CD4-positive, alpha-beta T cell (primary cell): ENCODE measurements at regions of chr16 and their contacts with region 1.

Region 1: GRCh38 chr16:31868691-31869167 is 4.9 kb upstream of the ZNF267 start:
- DNase-seq: peak; percentile 68 to 88 (median 77)
- ATAC-seq: peak; percentile 35
- H3K4me3 ChIP-seq: peak overlapping the region; percentile 42
- H3K4me3 Mint-ChIP-seq: peak overlapping the region; percentile 78
- H3K27ac ChIP-seq: peak overlapping the region; percentile 49 to 92
- H3K27ac Mint-ChIP-seq: peak overlapping the region; percentile 74
- H3K4me1 ChIP-seq: peaks cover 43% of the 10 kb centered on the region
- H3K4me1 Mint-ChIP-seq: peaks cover 39% of the 10 kb centered on the region
- H3K27me3 ChIP-seq: no peaks in the 10 kb centered on the region
- H3K27me3 Mint-ChIP-seq: no peaks in the 10 kb centered on the region
- CTCF ChIP-seq: peak; percentile 94

Region 2: GRCh38 chr16:30957456-30958174 is 911.1 kb before region 1 on chr16 and contains the start of gene SETD1A:
- CTCF ChIA-PET with region 1: interaction called, 3 read pairs
- POLR2A ChIA-PET with region 1: no interaction called
- intact Hi-C with region 1: loop called in 1 of 2 experiments (anchors 10 kb)
- DNase-seq: peak; percentile 94 to 99 (median 97)
- ATAC-seq: peak; percentile 86
- H3K4me3 ChIP-seq: peak within 1 kb of the TSS; percentile 82
- H3K4me3 Mint-ChIP-seq: peak within 1 kb of the TSS; percentile 97
- H3K27ac ChIP-seq: peak within 1 kb of the TSS; percentile 95
- H3K27ac Mint-ChIP-seq: peak within 1 kb of the TSS; percentile 97
- H3K4me1 ChIP-seq: peaks cover 37% of the 10 kb centered on the region
- H3K4me1 Mint-ChIP-seq: peaks cover 39% of the 10 kb centered on the region
- H3K27me3 ChIP-seq: no peaks in the 10 kb centered on the region
- H3K27me3 Mint-ChIP-seq: no peaks in the 10 kb centered on the region
- CTCF ChIP-seq: no peak
- total RNA-seq, gene SETD1A: 40.1 to 41.2 TPM

Region 3: DNA sequence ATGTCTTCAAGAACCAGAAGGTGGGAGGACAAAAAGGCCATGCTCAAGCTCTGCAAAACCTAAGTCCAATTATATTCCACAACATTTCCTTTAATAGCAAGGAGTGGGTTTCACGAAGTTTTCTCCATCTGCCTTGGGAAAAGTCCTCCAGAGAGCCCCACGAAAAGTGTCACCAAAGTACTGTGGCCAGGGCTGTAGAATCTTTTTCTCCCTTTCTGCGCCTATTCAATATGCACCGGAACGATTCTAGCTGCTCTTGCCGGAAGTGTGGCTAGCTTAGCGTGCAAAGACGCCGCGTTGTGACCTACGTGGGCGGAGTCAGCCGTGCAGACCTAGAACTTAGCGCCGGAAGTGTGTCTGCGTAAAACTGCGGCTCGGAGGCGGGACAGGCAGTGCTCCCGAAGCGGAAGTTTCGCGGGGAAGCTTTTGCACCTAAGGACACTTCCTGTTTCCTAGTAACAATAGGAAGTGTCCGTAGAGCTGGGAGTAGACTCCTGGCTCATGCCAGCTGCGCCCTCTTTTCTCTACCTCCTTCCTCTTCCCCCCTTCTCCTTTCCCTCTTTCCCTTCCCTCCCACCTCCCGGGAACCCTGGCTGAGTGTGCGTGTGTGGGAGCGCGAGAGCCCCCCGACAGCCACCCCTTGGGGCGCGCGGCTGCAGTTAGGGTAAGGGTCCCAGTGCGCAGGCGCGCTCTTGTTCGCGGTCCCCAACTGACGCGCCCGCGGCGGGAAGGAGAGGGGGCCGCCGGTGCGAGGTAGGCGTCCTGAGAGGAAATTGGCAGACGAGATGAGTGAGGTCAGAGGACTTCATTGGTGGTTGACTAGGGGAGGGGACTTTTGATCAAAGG is 794.5 kb before region 1 on chr16 and contains the starts of genes ZNF646 and ZNF668:
- CTCF ChIA-PET with region 1: no interaction called
- POLR2A ChIA-PET with region 1: interaction called, 11 read pairs
- intact Hi-C with region 1: loop called in 1 of 2 experiments (anchors 5 kb)
- DNase-seq: peak; percentile 94 to 100 (median 97)
- ATAC-seq: peak; percentile 81
- H3K4me3 ChIP-seq: peak within 1 kb of the TSS; percentile 96
- H3K4me3 Mint-ChIP-seq: peak within 1 kb of the TSS; percentile 98
- H3K27ac ChIP-seq: peak within 1 kb of the TSS; percentile 93 to 95
- H3K27ac Mint-ChIP-seq: peak within 1 kb of the TSS; percentile 92
- H3K4me1 ChIP-seq: peaks cover 35% of the 10 kb centered on the region
- H3K4me1 Mint-ChIP-seq: peaks cover 34% of the 10 kb centered on the region
- H3K27me3 ChIP-seq: no peaks in the 10 kb centered on the region
- H3K27me3 Mint-ChIP-seq: no peaks in the 10 kb centered on the region
- CTCF ChIP-seq: no peak
- total RNA-seq, gene ZNF646: 14.3 to 16.6 TPM
- total RNA-seq, gene ZNF668: 4.5 to 6.0 TPM

Region 4: DNA sequence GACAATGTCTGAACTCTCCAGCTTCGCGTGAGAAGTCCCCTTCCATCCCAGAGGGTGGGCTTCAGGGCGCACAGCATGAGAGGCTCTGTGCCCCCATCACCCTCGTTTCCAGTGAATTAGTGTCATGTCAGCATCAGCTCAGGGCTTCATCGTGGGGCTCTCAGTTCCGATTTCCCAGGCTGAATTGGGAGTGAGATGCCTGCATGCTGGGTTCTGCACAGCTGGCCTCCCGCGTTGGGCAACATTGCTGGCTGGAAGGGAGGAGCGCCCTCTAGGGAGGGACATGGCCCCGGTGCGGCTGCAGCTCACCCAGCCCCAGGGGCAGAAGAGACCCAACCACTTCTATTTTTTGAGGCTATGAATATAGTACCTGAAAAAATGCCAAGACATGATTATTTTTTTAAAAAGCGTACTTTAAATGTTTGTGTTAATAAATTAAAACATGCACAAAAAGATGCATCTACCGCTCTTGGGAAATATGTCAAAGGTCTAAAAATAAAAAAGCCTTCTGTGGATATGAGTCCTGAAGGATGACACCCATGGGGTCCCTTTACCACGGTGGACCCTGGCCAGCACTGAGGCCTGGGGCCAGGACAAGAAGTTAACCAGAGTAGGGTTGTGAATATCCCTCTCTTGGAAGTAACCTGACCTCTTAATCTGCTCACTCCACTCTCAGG is 486.1 kb before region 1 on chr16:
- CTCF ChIA-PET with region 1: no interaction called
- POLR2A ChIA-PET with region 1: no interaction called
- intact Hi-C with region 1: loop called in 1 of 2 experiments (anchors 5 kb)
- DNase-seq: peak; percentile 26 to 74 (median 50)
- ATAC-seq: peak; percentile 69
- H3K4me3 ChIP-seq: no peak overlapping the region
- H3K4me3 Mint-ChIP-seq: no peak overlapping the region
- H3K27ac ChIP-seq: no peak overlapping the region
- H3K27ac Mint-ChIP-seq: no peak overlapping the region
- H3K4me1 ChIP-seq: peaks cover 4% of the 10 kb centered on the region
- H3K4me1 Mint-ChIP-seq: no peaks in the 10 kb centered on the region
- H3K27me3 ChIP-seq: peaks cover 0 to 4% of the 10 kb centered on the region in 2 experiments
- H3K27me3 Mint-ChIP-seq: peaks cover 20% of the 10 kb centered on the region
- CTCF ChIP-seq: peak; percentile 53

Region 5: GRCh38 chr16:31695667-31696066 is 173.1 kb before region 1 on chr16:
- CTCF ChIA-PET with region 1: interaction called, 3 read pairs
- POLR2A ChIA-PET with region 1: interaction called, 17 read pairs
- intact Hi-C with region 1: loop called in 1 of 2 experiments (anchors 2 kb)
- DNase-seq: peak in 12 of 14 experiments; percentile 27 to 93 (median 53)
- ATAC-seq: peak; percentile 94
- H3K4me3 ChIP-seq: no peak overlapping the region
- H3K4me3 Mint-ChIP-seq: no peak overlapping the region
- H3K27ac ChIP-seq: peak overlapping the region in 1 of 2 donors; percentile 50
- H3K27ac Mint-ChIP-seq: no peak overlapping the region
- H3K4me1 ChIP-seq: peaks cover 31% of the 10 kb centered on the region
- H3K4me1 Mint-ChIP-seq: peaks cover 14% of the 10 kb centered on the region
- H3K27me3 ChIP-seq: no peaks in the 10 kb centered on the region
- H3K27me3 Mint-ChIP-seq: no peaks in the 10 kb centered on the region
- CTCF ChIP-seq: no peak